HepG2 (cell line): ENCODE measurements at regions of chr2 and their contacts with region 1.

Region 1: GRCh38 chr2:177906041-177906718 is 166.4 kb downstream of the PDE11A start:
- DNase-seq: peak; percentile 53
- ATAC-seq: peak; percentile 100
- H3K4me3 ChIP-seq: peak overlapping the region in 1 of 3 experiments; percentile 8; a peak in 1 of 6 replicates
- H3K27ac ChIP-seq: no peak overlapping the region
- H3K4me1 ChIP-seq: no peaks in the 10 kb centered on the region
- H3K27me3 ChIP-seq: no peaks in the 10 kb centered on the region
- CTCF ChIP-seq: peak; percentile 98
- EP300 ChIP-seq: no peak
- POLR2A ChIP-seq: no peak
- RAD21 ChIP-seq: peak; percentile 77

Region 2: GRCh38 chr2:177622521-177622920 is 283.7 kb before region 1 on chr2:
- CTCF ChIA-PET with region 1: no interaction called
- POLR2A ChIA-PET with region 1: no interaction called
- in situ Hi-C with region 1: no loop called
- intact Hi-C with region 1: no loop called
- DNase-seq: peak; percentile 30
- ATAC-seq: peak; percentile 51
- H3K4me3 ChIP-seq: no peak overlapping the region
- H3K27ac ChIP-seq: no peak overlapping the region
- H3K4me1 ChIP-seq: peaks cover 29% of the 10 kb centered on the region
- H3K27me3 ChIP-seq: no peaks in the 10 kb centered on the region; a peak in 1 of 5 replicates
- CTCF ChIP-seq: peak; percentile 74
- EP300 ChIP-seq: no peak
- POLR2A ChIP-seq: no peak
- RAD21 ChIP-seq: no peak

Region 3: GRCh38 chr2:177852389-177852788 is 53.8 kb before region 1 on chr2:
- CTCF ChIA-PET with region 1: no interaction called
- POLR2A ChIA-PET with region 1: no interaction called
- in situ Hi-C with region 1: no loop called
- intact Hi-C with region 1: no loop called
- DNase-seq: no peak
- ATAC-seq: no peak
- H3K4me3 ChIP-seq: no peak overlapping the region
- H3K27ac ChIP-seq: no peak overlapping the region
- H3K4me1 ChIP-seq: no peaks in the 10 kb centered on the region
- H3K27me3 ChIP-seq: no peaks in the 10 kb centered on the region
- CTCF ChIP-seq: no peak
- EP300 ChIP-seq: no peak
- POLR2A ChIP-seq: no peak
- RAD21 ChIP-seq: no peak

Region 4: DNA sequence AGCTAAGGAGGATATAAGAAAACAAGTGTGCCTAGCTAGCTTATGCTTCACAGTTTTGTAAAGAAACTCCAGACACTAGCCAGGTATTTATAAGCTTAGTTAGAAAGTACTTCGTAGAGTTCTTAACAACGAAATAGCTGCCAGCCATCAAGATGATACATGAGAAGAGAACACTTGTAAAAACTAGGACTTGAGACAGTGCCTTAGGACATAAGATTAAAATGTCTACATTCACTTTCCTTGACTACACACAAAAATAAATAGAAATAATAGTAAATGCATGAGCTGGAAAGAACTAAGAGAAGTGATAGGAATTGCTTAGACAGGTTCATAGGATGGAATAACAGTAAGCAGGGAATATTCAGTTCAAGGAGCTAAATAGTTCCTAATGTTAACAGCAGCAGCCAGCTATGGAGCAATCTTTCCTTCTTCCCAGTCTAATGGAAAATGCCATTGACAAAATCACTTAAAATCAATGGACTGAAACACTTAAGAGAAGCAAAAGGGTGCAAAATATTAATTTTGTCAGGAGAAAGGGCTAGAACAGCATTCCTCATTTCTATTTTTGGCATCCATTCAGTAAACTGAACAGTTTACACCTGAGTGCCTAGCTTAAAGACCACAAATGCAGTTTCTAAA is 20.2 kb before region 1 on chr2:
- CTCF ChIA-PET with region 1: no interaction called
- POLR2A ChIA-PET with region 1: no interaction called
- in situ Hi-C with region 1: no loop called
- intact Hi-C with region 1: loop called (anchors 2 kb)
- DNase-seq: no peak
- ATAC-seq: no peak
- H3K4me3 ChIP-seq: no peak overlapping the region
- H3K27ac ChIP-seq: no peak overlapping the region
- H3K4me1 ChIP-seq: peaks cover 3% of the 10 kb centered on the region; the same call in 1 of the 2 replicates
- H3K27me3 ChIP-seq: no peaks in the 10 kb centered on the region
- CTCF ChIP-seq: no peak
- EP300 ChIP-seq: no peak
- POLR2A ChIP-seq: no peak
- RAD21 ChIP-seq: no peak

Region 5: DNA sequence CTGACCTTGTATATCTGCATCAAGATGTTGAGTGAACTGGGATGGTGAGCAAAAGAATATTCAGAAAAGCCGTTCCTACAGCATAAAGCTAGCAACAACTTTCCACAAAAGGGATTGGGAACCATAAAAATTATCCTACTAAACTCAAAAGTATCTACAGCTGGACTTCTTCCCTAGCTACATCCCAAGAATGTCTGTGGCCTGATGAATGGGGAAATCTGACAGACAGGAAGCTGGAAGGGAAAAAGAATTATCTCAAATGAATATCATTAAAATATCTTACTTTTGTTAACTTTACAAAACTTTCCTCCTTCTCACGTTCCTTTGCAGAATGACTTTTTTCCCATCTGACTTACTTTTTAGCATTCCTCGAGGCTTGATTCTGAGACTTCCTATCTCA is 15.5 kb after region 1 on chr2:
- CTCF ChIA-PET with region 1: no interaction called
- POLR2A ChIA-PET with region 1: no interaction called
- in situ Hi-C with region 1: no loop called
- intact Hi-C with region 1: no loop called
- DNase-seq: no peak
- ATAC-seq: no peak
- H3K4me3 ChIP-seq: no peak overlapping the region
- H3K27ac ChIP-seq: no peak overlapping the region
- H3K4me1 ChIP-seq: no peaks in the 10 kb centered on the region
- H3K27me3 ChIP-seq: no peaks in the 10 kb centered on the region
- CTCF ChIP-seq: no peak
- EP300 ChIP-seq: no peak
- POLR2A ChIP-seq: no peak
- RAD21 ChIP-seq: no peak

Region 6: GRCh38 chr2:177983183-177983788 is 77.1 kb after region 1 on chr2:
- CTCF ChIA-PET with region 1: no interaction called
- POLR2A ChIA-PET with region 1: no interaction called
- in situ Hi-C with region 1: no loop called
- intact Hi-C with region 1: loop called (anchors 5 kb)
- DNase-seq: peak; percentile 53
- ATAC-seq: peak; percentile 90
- H3K4me3 ChIP-seq: no peak overlapping the region
- H3K27ac ChIP-seq: no peak overlapping the region
- H3K4me1 ChIP-seq: no peaks in the 10 kb centered on the region
- H3K27me3 ChIP-seq: no peaks in the 10 kb centered on the region
- CTCF ChIP-seq: peak; percentile 80
- EP300 ChIP-seq: no peak
- POLR2A ChIP-seq: no peak
- RAD21 ChIP-seq: peak; percentile 67

Region 7: GRCh38 chr2:178072383-178073301 is 166.5 kb after region 1 on chr2 and contains the start of gene PDE11A:
- CTCF ChIA-PET with region 1: no interaction called
- POLR2A ChIA-PET with region 1: no interaction called
- in situ Hi-C with region 1: no loop called
- intact Hi-C with region 1: loop called (anchors 5 kb)
- DNase-seq: peak; percentile 88
- ATAC-seq: peak; percentile 99
- H3K4me3 ChIP-seq: peak within 1 kb of the TSS; percentile 67 to 77 (median 76)
- H3K27ac ChIP-seq: peak within 1 kb of the TSS; percentile 27
- H3K4me1 ChIP-seq: peaks cover 44% of the 10 kb centered on the region
- H3K27me3 ChIP-seq: peaks cover 0 to 6% of the 10 kb centered on the region in 2 experiments; a peak in 1 of 5 replicates
- CTCF ChIP-seq: no peak; the same call in none of the 2 replicates
- EP300 ChIP-seq: peak; percentile 36 to 67; a peak in 3 of 4 replicates
- POLR2A ChIP-seq: peak; percentile 92 to 95
- RAD21 ChIP-seq: no peak; the same call in 1 of the 2 replicates
- total RNA-seq, gene PDE11A: 1.2 and 1.4 TPM in 2 replicates